ENCODE measurements at regions of chr9 and their contacts with region 1.

Region 1: GRCh38 chr9:133144137-133144903 is 19.4 kb downstream of the GBGT1 start:
- DNase-seq: peak; percentile 69 to 93 (median 82)
- ATAC-seq: peak in 3 of 4 donors; percentile 28 to 47 (median 45)
- H3K4me3 ChIP-seq: peak overlapping the region in 10 of 12 donors; percentile 30 to 56 (median 44)
- H3K27ac ChIP-seq: peak overlapping the region in 10 of 12 donors; percentile 2 to 79 (median 28)
- H3K4me1 ChIP-seq: peaks cover 7 to 77% (median 51%) of the 10 kb centered on the region in 12 donors
- H3K27me3 ChIP-seq: no peaks in the 10 kb centered on the region
- CTCF ChIP-seq: peak; percentile 95 to 100 (median 99)
- POLR2A ChIP-seq: no peak

Region 2: DNA sequence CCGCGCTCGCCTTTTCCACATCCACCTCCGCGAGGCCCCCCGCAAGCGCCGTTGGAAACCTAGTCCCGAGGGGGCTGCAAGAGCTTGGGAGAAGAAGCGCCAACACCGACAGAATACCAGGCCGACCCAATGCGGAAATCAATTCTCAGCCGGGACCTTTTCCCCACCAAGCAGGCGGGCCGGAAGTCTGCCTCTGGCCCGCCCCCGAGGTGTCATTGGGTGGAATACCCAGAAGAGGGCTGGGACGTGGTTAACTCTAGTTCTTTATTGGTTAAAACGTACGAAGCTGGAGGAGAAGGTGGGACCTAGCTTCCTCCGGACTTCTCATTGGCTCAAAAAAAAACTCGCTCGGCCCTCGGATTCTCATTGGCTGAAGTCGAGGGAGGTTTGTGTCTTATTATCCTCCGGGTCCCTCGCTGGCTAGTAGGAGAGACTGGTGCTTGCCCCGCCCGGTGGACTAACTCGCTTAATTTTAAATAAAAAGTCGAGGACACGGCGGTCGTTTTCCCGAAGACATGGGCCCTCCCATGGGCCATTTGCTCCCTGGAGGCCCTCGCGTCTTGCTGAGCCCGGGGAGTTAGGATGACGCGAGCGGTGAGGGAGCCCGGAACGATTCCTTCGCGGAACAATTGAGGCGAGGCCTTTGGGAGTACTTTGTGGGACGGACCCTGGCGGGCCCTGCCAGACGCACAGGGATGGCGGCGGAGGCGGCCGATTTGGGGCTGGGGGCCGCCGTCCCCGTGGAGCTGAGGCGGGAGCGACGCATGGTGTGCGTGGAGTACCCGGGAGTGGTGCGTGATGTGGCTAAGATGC is 113.8 kb before region 1 on chr9 and contains the start of gene GTF3C5:
- intact Hi-C with region 1: loop called in 2 of 10 experiments (anchors 5 kb)
- DNase-seq: peak; percentile 93 to 95 (median 94)
- ATAC-seq: peak; percentile 98 to 99 (median 99)
- H3K4me3 ChIP-seq: peak within 1 kb of the TSS; percentile 69 to 99 (median 92)
- H3K27ac ChIP-seq: peak within 1 kb of the TSS; percentile 81 to 96 (median 90)
- H3K4me1 ChIP-seq: peaks cover 8 to 37% (median 23%) of the 10 kb centered on the region in 12 donors
- H3K27me3 ChIP-seq: no peaks in the 10 kb centered on the region
- CTCF ChIP-seq: peak in 2 of 12 donors; percentile 5 to 21
- POLR2A ChIP-seq: peak in 1 of 2 donors; percentile 52
- total RNA-seq, gene GTF3C5: 22.9 to 45.8 (median 34.5) TPM

Region 3: GRCh38 chr9:133048569-133048968 is 95.8 kb before region 1 on chr9:
- intact Hi-C with region 1: loop called in 8 of 10 experiments (anchors 2 to 10 kb)
- DNase-seq: no peak
- ATAC-seq: peak in 3 of 4 donors; percentile 25 to 54 (median 48)
- H3K4me3 ChIP-seq: no peak overlapping the region
- H3K27ac ChIP-seq: no peak overlapping the region
- H3K4me1 ChIP-seq: peaks cover 0 to 3% (median 0%) of the 10 kb centered on the region in 12 donors
- H3K27me3 ChIP-seq: no peaks in the 10 kb centered on the region
- CTCF ChIP-seq: peak in 10 of 12 donors; percentile 22 to 49 (median 36)
- POLR2A ChIP-seq: no peak

Region 4: GRCh38 chr9:133054966-133055365 is 89.4 kb before region 1 on chr9:
- intact Hi-C with region 1: loop called in 3 of 10 experiments (anchors 5 kb)
- DNase-seq: peak; percentile 79 to 93 (median 84)
- ATAC-seq: peak; percentile 88 to 94 (median 92)
- H3K4me3 ChIP-seq: no peak overlapping the region
- H3K27ac ChIP-seq: peak overlapping the region; percentile 46 to 95 (median 88)
- H3K4me1 ChIP-seq: peaks cover 0 to 38% (median 18%) of the 10 kb centered on the region in 12 donors
- H3K27me3 ChIP-seq: no peaks in the 10 kb centered on the region
- CTCF ChIP-seq: no peak
- POLR2A ChIP-seq: no peak

Region 5: GRCh38 chr9:133103183-133103986 is 40.9 kb before region 1 on chr9:
- intact Hi-C with region 1: loop called (anchors 1 to 2 kb)
- DNase-seq: peak; percentile 62 to 87 (median 66)
- ATAC-seq: peak; percentile 35 to 78 (median 68)
- H3K4me3 ChIP-seq: no peak overlapping the region
- H3K27ac ChIP-seq: peak overlapping the region in 1 of 12 donors; percentile 33
- H3K4me1 ChIP-seq: peaks cover 0 to 3% (median 0%) of the 10 kb centered on the region in 12 donors
- H3K27me3 ChIP-seq: no peaks in the 10 kb centered on the region
- CTCF ChIP-seq: peak; percentile 87 to 100 (median 98)
- POLR2A ChIP-seq: no peak

Region 6: DNA sequence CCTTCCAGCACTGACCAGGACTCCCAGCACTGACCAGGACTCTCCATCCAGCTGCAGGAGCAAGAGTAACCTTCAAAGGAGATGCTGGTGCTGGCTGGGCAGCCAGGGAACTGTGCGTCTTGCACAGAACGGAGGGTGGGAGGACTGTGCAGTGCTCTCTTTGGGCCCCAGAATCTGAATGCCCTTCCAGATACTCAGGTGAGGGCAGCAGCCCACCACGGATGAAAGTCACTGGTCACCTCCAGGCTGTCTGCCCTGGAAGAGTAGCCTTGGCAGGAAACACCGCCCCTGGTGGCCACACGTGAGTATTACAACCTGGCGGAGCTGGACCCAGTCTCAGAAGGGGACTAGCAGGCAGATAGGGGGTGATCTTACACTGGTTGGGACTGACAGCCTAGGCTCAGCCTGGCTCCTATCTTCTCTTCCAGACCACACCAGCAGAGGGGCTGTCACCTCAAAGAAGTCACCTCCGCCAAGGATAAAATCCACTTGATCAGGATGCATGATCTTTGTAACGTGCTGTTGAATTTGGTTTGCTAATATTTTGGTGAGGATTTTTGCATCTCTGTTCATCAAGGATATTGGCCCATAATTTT is 598.6 kb after region 1 on chr9:
- intact Hi-C with region 1: no loop called
- DNase-seq: peak in 4 of 5 donors; percentile 58 to 76 (median 64)
- ATAC-seq: peak; percentile 34 to 86 (median 79)
- H3K4me3 ChIP-seq: no peak overlapping the region
- H3K27ac ChIP-seq: no peak overlapping the region
- H3K4me1 ChIP-seq: peaks cover 0 to 8% (median 5%) of the 10 kb centered on the region in 12 donors
- H3K27me3 ChIP-seq: peaks cover 0 to 15% (median 0%) of the 10 kb centered on the region in 9 donors
- CTCF ChIP-seq: peak; percentile 92 to 100 (median 98)
- POLR2A ChIP-seq: no peak